ENCODE measurements at regions of chr1 and their contacts with region 1.

Region 1: GRCh38 chr1:8015036-8015808 is 10.9 kb downstream of the ERRFI1 start:
- DNase-seq: no peak
- H3K4me3 ChIP-seq: no peak overlapping the region
- H3K27ac ChIP-seq: no peak overlapping the region
- H3K4me1 ChIP-seq: peaks cover 4 to 15% (median 10%) of the 10 kb centered on the region in 4 experiments; a peak in 6 of 7 replicates
- H3K27me3 ChIP-seq: no peaks in the 10 kb centered on the region
- CTCF ChIP-seq: peak in 2 of 3 experiments; percentile 62 to 69; a peak in 3 of 4 replicates
- EP300 ChIP-seq: no peak
- POLR2A ChIP-seq: no peak
- RAD21 ChIP-seq: peak; percentile 81 to 83

Region 2: DNA sequence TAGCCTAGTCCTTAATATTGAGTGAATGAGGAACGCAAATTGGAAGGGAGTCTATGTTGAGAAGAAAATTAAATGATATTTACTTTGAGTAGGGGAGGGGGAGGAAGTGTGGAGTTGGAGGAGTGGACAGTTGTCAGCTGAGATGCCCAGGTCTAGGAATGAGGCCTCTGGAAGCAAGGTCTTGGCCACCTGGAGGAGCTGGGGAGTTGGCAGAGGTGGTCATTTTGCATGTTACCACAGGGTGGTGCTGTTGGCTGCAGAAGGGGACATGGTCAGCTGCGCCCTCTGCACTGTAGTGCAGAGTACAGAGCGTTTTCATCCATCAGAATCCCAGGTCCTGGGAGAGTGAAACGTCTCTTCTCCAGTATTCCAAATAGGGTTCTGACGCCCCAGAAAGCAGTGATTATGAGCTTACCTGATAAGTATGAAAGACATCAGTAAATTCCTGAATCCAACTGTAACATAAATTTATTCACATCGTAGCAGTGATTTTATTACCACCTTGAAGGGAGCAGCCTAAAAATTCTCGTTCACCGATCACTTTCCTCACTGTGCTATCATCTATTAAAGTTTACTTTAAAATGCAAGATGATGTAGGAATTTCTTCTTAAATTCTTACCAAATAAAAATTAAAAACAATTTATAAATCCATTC is 39.9 kb before region 1 on chr1:
- CTCF ChIA-PET with region 1: interaction called, 56 read pairs
- POLR2A ChIA-PET with region 1: interaction called, 11 read pairs
- DNase-seq: peak in 1 of 2 experiments; percentile 90
- H3K4me3 ChIP-seq: no peak overlapping the region
- H3K27ac ChIP-seq: no peak overlapping the region
- H3K4me1 ChIP-seq: no peaks in the 10 kb centered on the region
- H3K27me3 ChIP-seq: no peaks in the 10 kb centered on the region
- CTCF ChIP-seq: peak; percentile 97 to 100 (median 100)
- EP300 ChIP-seq: no peak
- POLR2A ChIP-seq: no peak
- RAD21 ChIP-seq: peak; percentile 93

Region 3: DNA sequence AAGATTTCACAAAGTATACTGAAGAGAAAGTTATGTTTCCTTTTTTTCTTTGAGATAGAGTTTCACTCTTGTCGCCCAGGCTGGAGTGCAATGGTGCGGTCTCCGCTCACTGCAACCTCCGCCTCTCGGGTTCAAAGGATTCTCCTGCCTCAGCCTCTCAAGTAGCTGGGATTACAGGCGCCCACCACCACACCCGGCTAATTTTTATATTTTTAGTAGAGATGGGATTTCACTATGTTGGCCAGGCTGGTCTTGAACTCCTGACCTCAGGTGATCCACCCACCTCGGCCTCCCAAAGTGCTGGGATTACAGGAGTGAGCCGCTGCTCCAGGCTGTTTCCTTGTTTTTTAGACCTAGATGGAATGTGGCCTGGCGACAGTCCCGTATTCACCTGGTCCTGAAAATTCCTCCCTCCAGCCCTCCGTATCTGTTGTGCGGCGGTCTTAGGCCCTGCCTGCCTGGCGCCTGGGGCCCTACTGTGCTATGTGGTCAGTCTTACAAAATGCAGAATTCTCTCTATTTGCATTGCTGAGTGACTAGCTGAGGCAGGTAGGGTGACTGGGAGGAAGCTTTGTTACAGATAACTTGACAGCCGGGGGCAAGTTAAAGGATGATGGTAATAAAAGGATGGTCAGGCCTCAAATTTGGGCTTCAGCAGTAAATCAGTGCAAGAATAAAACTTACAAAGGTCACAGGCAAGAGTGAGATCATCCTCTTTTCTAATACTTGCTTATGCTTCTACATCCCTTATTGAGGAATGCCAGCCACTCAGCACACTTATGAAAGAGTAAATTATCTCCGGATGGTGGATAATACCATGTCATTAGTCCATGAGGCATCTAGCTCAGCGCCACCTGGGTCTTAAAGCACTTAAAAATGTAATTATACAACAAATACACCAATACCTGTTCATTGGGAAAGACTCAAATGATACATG is 23.4 kb before region 1 on chr1:
- CTCF ChIA-PET with region 1: interaction called, 100 read pairs
- POLR2A ChIA-PET with region 1: interaction called, 3 read pairs
- DNase-seq: peak; percentile 80 to 90
- H3K4me3 ChIP-seq: no peak overlapping the region
- H3K27ac ChIP-seq: no peak overlapping the region
- H3K4me1 ChIP-seq: peaks cover 0 to 3% (median under 1%) of the 10 kb centered on the region in 4 experiments; a peak in 4 of 7 replicates
- H3K27me3 ChIP-seq: no peaks in the 10 kb centered on the region
- CTCF ChIP-seq: no peak
- EP300 ChIP-seq: no peak; a peak in 1 of 3 replicates
- POLR2A ChIP-seq: no peak
- RAD21 ChIP-seq: peak; percentile 5 to 33; a peak in 2 of 4 replicates

Region 4: GRCh38 chr1:8026153-8026975 is 11.1 kb after region 1 on chr1 and contains the start of gene ERRFI1:
- CTCF ChIA-PET with region 1: interaction called, 23 read pairs
- POLR2A ChIA-PET with region 1: interaction called, 12 read pairs
- DNase-seq: peak; percentile 77 to 98
- H3K4me3 ChIP-seq: peak within 1 kb of the TSS; percentile 57 to 85 (median 66)
- H3K27ac ChIP-seq: no peak within 1 kb of the TSS
- H3K4me1 ChIP-seq: peaks cover 11 to 25% (median 20%) of the 10 kb centered on the region in 4 experiments
- H3K27me3 ChIP-seq: peaks cover 0 to 8% (median 6%) of the 10 kb centered on the region in 4 experiments; a peak in 5 of 7 replicates
- CTCF ChIP-seq: no peak
- EP300 ChIP-seq: peak; percentile 16 to 74
- POLR2A ChIP-seq: peak; percentile 96 to 97
- RAD21 ChIP-seq: no peak
- total RNA-seq, gene ERRFI1: 46.1 TPM in 2 replicates

Region 5: GRCh38 chr1:8348777-8349491 is 333.7 kb after region 1 on chr1:
- CTCF ChIA-PET with region 1: interaction called, 41 read pairs
- POLR2A ChIA-PET with region 1: interaction called, 3 read pairs
- DNase-seq: peak; percentile 72 to 92
- H3K4me3 ChIP-seq: no peak overlapping the region
- H3K27ac ChIP-seq: no peak overlapping the region
- H3K4me1 ChIP-seq: peaks cover 0 to 11% (median 3%) of the 10 kb centered on the region in 4 experiments; a peak in 5 of 7 replicates
- H3K27me3 ChIP-seq: no peaks in the 10 kb centered on the region
- CTCF ChIP-seq: peak; percentile 81 to 89 (median 89)
- EP300 ChIP-seq: peak in 1 of 2 experiments; percentile 85; a peak in 1 of 3 replicates
- POLR2A ChIP-seq: no peak; a peak in 1 of 3 replicates
- RAD21 ChIP-seq: peak; percentile 91 to 95